ENCODE measurements at regions of chr6 and their contacts with region 1.

Region 1: GRCh38 chr6:31403283-31403989 is at the start of gene MICA:
- DNase-seq: peak; percentile 79
- ATAC-seq: peak; percentile 74
- H3K4me3 ChIP-seq: peak within 1 kb of the TSS; percentile 83
- H3K27ac ChIP-seq: peak within 1 kb of the TSS; percentile 13
- H3K4me1 ChIP-seq: peaks cover 5% of the 10 kb centered on the region
- H3K27me3 ChIP-seq: no peaks in the 10 kb centered on the region
- CTCF ChIP-seq: no peak
- POLR2A ChIP-seq: peak; percentile 76; the same call in 1 of the 2 replicates
- RAD21 ChIP-seq: no peak
- total RNA-seq, gene MICA: 52.2 and 55.9 TPM in 2 replicates

Region 2: GRCh38 chr6:31383149-31383548 is 20.3 kb before region 1 on chr6:
- CTCF ChIA-PET with region 1: no interaction called
- POLR2A ChIA-PET with region 1: no interaction called
- dilution Hi-C with region 1: no loop called
- in situ Hi-C with region 1: no loop called
- intact Hi-C with region 1: no loop called
- DNase-seq: no peak
- ATAC-seq: no peak
- H3K4me3 ChIP-seq: no peak overlapping the region
- H3K27ac ChIP-seq: no peak overlapping the region
- H3K4me1 ChIP-seq: no peaks in the 10 kb centered on the region
- H3K27me3 ChIP-seq: peaks cover 32% of the 10 kb centered on the region
- CTCF ChIP-seq: no peak
- POLR2A ChIP-seq: no peak
- RAD21 ChIP-seq: no peak

Region 3: GRCh38 chr6:31441365-31442267 is 38.2 kb after region 1 on chr6:
- CTCF ChIA-PET with region 1: interaction called, 3 read pairs
- POLR2A ChIA-PET with region 1: no interaction called
- dilution Hi-C with region 1: no loop called
- in situ Hi-C with region 1: loop called (anchors 5 kb)
- intact Hi-C with region 1: loop called (anchors 1 kb)
- DNase-seq: peak; percentile 34
- ATAC-seq: peak; percentile 99
- H3K4me3 ChIP-seq: no peak overlapping the region
- H3K27ac ChIP-seq: no peak overlapping the region
- H3K4me1 ChIP-seq: peaks cover 2% of the 10 kb centered on the region; the same call in 1 of the 2 replicates
- H3K27me3 ChIP-seq: peaks cover 27% of the 10 kb centered on the region
- CTCF ChIP-seq: peak; percentile 81
- POLR2A ChIP-seq: no peak
- RAD21 ChIP-seq: peak; percentile 81

Region 4: DNA sequence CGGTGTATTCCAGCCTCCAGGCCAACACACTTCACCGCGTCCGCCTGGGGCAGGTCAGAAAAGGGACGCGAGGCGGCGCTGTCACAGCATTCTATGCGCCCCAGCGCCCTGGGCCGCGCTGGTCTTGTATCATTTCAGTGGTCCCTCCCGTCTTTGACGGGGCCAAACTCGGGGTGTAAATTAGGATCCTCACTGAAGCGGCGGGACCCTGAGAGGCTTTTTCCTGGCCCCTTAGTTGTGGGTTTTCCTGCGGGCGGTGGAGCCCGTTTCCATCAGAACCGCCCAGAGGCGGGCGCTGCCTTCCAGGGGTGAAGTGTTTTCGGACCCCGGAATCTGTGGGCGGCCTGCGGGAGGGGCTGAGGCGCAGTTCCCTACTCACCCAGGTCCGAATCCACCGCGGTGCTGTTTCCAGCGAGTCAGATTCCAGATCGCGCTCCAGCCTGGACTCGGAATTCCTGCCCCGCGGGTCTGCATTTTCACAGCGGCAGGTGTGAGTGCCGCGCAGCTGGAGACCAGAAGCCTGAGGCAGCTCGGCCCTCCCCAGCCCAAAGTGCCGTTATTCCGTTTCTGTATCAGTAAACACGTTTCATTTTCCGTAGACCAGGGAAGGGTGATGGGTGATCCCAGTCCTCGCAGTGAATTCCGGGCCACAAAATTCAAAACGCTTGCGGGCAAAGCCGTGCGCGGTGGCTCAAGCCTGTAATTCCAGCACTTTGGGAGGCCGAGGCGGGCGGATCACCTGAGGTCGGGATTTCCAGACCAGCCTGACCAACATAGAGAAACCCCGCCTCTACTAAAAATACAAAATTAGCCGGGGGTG is 90.6 kb after region 1 on chr6:
- CTCF ChIA-PET with region 1: no interaction called
- POLR2A ChIA-PET with region 1: no interaction called
- dilution Hi-C with region 1: no loop called
- in situ Hi-C with region 1: no loop called
- intact Hi-C with region 1: loop called (anchors 5 kb)
- DNase-seq: peak; percentile 70
- ATAC-seq: peak; percentile 73
- H3K4me3 ChIP-seq: peak overlapping the region; percentile 59
- H3K27ac ChIP-seq: peak overlapping the region; percentile 81; the same call in 1 of the 2 replicates
- H3K4me1 ChIP-seq: peaks cover 3% of the 10 kb centered on the region
- H3K27me3 ChIP-seq: no peaks in the 10 kb centered on the region
- CTCF ChIP-seq: peak; percentile 92
- POLR2A ChIP-seq: no peak
- RAD21 ChIP-seq: peak; percentile 84

Region 5: DNA sequence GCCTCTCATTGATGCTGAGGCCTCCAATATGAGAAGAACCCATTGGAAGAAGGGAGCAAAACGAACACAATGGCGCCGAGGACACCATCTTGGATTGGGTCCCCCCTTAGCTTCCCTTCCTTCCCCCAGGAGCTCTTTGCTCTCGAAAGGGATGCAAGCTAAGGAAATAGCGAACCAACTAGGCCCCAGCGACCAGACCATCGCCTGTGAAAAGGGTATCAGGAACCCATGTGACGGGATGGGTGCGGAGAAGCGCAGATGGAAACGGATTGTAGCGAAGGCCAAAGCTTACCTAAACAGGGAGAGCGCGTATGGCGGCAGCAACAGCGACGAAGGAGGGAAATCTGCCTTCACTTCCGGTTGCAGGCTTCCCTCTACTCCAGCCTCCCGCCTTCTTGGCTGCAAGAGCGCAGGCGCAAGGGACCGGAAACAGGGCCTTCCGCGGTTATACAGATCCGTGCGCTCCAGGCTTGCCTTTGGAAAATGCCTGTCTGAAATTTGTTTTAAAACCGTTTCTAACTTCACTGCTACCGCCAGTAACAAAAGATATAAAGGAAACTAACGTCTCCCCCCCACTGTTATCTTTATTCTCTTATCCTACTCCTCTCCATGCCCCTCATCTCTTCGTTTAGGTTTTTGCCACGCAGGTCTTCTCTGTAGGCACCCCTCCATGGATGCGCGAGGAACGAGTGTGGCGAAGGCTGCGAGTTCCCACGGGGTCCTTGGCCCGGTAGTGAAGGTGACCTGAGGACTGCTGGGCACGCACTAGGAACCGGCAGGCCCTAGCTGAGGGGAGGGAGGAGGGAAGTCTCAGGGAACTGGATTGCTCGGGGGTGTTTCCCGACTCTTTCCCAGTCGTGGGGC is 138.5 kb after region 1 on chr6 and contains the start of gene DDX39B:
- CTCF ChIA-PET with region 1: no interaction called
- POLR2A ChIA-PET with region 1: no interaction called
- dilution Hi-C with region 1: no loop called
- in situ Hi-C with region 1: no loop called
- intact Hi-C with region 1: loop called (anchors 1 kb)
- DNase-seq: peak; percentile 98
- ATAC-seq: peak; percentile 83
- H3K4me3 ChIP-seq: peak within 1 kb of the TSS; percentile 72
- H3K27ac ChIP-seq: peak within 1 kb of the TSS; percentile 83
- H3K4me1 ChIP-seq: peaks cover 10% of the 10 kb centered on the region
- H3K27me3 ChIP-seq: no peaks in the 10 kb centered on the region
- CTCF ChIP-seq: no peak
- POLR2A ChIP-seq: peak; percentile 98
- RAD21 ChIP-seq: 0 out of 2 replicates have a peak, but pooled peaks have one; percentile 13
- total RNA-seq, gene DDX39B: 640 and 796 TPM in 2 replicates

Region 6: DNA sequence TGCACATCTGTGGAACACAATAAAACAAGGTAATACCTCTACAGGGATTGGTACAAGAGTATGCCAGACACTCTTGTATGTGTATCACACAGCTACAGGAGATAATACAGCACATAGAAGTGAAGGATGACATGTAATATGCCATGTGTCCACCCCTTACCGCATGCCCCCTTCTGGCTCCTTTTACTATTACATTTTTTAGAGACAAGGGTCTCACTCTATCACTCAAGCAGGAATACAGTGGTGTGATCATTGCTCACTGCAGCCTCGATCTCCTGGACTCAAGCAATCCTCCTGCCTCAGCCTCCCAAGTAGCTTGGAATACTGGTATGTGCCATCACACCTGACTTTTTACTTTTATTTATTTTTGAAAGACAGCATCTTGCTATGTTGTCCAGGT is 193.6 kb after region 1 on chr6:
- CTCF ChIA-PET with region 1: interaction called, 3 read pairs
- POLR2A ChIA-PET with region 1: no interaction called
- dilution Hi-C with region 1: no loop called
- in situ Hi-C with region 1: no loop called
- intact Hi-C with region 1: loop called (anchors 5 kb)
- DNase-seq: peak; percentile 31
- ATAC-seq: peak; percentile 56; the same call in 1 of the 2 replicates
- H3K4me3 ChIP-seq: no peak overlapping the region
- H3K27ac ChIP-seq: no peak overlapping the region
- H3K4me1 ChIP-seq: no peaks in the 10 kb centered on the region
- H3K27me3 ChIP-seq: no peaks in the 10 kb centered on the region; the same call in 1 of the 2 replicates
- CTCF ChIP-seq: peak; percentile 37
- POLR2A ChIP-seq: no peak
- RAD21 ChIP-seq: peak; percentile 42